ENCODE measurements at regions of chr7 and their contacts with region 1.

Region 1: DNA sequence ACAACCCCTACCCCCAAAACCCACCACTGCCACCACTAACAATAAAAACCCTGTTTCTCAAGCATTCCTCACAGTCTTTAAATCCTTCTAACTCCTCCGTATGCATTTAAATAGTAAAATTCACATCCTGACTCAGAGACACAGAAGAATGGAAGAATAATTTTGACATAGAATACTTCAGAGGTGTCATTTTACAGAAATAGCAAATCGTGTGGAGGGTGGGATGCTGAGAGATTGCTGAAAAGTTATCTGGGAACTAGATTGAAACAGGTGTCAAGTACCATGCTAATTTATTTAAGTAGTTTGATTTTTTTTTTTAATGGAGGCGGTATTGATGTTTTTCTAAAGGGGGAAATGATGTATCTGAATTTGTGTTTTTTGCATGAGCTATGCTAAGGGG is 575.2 kb upstream of the TPK1 start:
- DNase-seq: no peak
- ATAC-seq: no peak
- H3K4me3 ChIP-seq: no peak overlapping the region
- H3K27ac ChIP-seq: no peak overlapping the region
- H3K4me1 ChIP-seq: no peaks in the 10 kb centered on the region
- H3K27me3 ChIP-seq: no peaks in the 10 kb centered on the region
- CTCF ChIP-seq: no peak

Region 2: GRCh38 chr7:145378197-145378596 is 32.9 kb before region 1 on chr7:
- CTCF ChIA-PET with region 1: no interaction called
- POLR2A ChIA-PET with region 1: no interaction called
- intact Hi-C with region 1: no loop called
- DNase-seq: no peak
- ATAC-seq: no peak
- H3K4me3 ChIP-seq: no peak overlapping the region
- H3K27ac ChIP-seq: no peak overlapping the region
- H3K4me1 ChIP-seq: no peaks in the 10 kb centered on the region
- H3K27me3 ChIP-seq: no peaks in the 10 kb centered on the region
- CTCF ChIP-seq: no peak

Region 3: GRCh38 chr7:145431834-145432233 is 20.8 kb after region 1 on chr7:
- CTCF ChIA-PET with region 1: no interaction called
- POLR2A ChIA-PET with region 1: no interaction called
- intact Hi-C with region 1: loop called (anchors 2 kb)
- DNase-seq: no peak
- ATAC-seq: no peak
- H3K4me3 ChIP-seq: no peak overlapping the region
- H3K27ac ChIP-seq: no peak overlapping the region
- H3K4me1 ChIP-seq: no peaks in the 10 kb centered on the region
- H3K27me3 ChIP-seq: peaks cover 9% of the 10 kb centered on the region; the same call in 1 of the 2 replicates
- CTCF ChIP-seq: no peak

Measured in PC-3 (cell line).